ENCODE measurements at regions of chr1 and their contacts with region 1.

Region 1: DNA sequence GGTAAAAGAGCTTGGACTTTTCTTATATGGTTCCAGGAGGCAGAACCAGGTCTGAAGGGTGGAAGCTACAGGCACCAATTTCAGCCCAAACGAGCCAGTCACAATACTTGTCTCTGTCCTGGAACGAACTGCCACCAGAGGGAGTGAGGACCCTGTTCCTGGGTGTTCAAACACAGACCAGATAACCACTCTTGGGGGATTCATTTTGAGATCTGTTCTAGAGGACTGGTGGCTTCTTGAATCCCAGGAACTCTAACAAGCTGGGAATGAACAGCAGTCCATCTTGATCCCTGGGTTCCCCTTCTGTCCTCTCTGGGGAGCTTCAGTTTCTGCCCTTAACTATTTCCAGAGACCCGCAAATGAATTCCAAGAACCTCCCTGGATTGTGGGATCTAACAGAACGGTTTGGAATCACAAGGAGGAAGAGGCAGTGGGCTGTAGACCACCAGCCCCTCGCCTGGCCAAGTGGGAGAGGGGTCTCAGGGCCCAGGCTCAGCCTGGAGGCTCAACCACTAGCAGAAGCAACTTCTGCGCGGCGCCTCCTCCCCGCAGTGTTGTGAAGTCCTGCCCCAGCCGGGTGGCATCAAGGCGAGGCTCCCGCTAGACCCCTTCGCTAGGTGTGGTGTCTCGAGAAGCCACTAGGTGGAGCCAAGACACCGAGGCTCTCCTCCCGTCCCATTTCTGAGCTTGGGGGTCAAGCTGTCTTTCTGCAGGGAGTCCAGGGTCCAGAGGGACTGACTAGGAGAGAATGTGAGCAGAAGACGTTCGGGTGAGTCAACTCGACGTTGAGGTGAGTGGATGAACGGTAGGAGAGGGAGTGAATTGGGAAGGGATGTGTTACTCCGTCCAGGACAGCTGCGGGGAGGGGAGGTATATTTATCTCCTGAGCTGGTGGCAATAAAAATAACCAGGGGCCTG is 12.1 kb upstream of the NES start:
- DNase-seq: peak; percentile 81
- ATAC-seq: peak; percentile 77
- H3K4me3 ChIP-seq: peak overlapping the region; percentile 41 to 55
- H3K27ac ChIP-seq: peak overlapping the region; percentile 49
- H3K4me1 ChIP-seq: peaks cover 70 to 90% of the 10 kb centered on the region in 2 experiments
- H3K27me3 ChIP-seq: no peaks in the 10 kb centered on the region
- CTCF ChIP-seq: peak in 2 of 3 experiments; percentile 69 to 87; a peak in 4 of 6 replicates
- POLR2A ChIP-seq: no peak
- RAD21 ChIP-seq: no peak

Region 2: DNA sequence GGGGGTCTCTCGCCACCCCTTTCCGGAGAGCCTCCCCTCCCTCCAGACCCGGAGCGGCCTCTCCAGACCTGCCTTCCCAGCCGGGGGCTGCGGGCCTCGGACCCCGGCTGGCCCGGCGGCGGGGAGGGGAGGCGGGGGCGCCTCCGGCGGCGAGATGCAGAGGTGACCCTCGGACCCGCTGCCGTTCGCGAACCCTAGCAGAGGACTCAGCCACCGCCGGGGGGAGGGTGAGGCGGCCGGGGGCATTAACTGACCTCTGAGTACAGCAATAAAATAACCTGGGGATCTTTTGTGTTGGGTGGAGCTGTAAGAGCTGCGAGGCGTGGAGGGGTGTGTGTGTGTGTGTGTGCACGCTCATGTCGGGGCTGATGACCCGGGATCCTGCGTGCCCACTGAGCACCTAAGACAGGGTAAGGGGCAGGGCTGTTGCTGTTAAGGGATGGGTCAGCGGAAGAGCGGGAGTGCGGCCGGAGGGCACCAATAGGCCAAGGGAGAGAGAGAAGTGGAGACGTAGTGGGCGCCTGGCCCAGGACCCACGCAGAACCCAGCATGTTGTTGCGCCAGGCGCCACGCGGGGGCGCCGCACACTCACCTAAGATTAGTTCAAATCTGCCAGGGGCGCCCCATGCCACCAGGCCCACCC is 63.7 kb before region 1 on chr1:
- CTCF ChIA-PET with region 1: interaction called, 12 read pairs
- POLR2A ChIA-PET with region 1: no interaction called
- RAD21 ChIA-PET with region 1: interaction called in 1 of 2 experiments, 3 read pairs
- intact Hi-C with region 1: no loop called
- DNase-seq: no peak
- ATAC-seq: peak; percentile 80
- H3K4me3 ChIP-seq: peak overlapping the region; percentile 33 to 46
- H3K27ac ChIP-seq: no peak overlapping the region
- H3K4me1 ChIP-seq: peaks cover 3 to 7% of the 10 kb centered on the region in 2 experiments; a peak in 2 of 4 replicates
- H3K27me3 ChIP-seq: no peaks in the 10 kb centered on the region
- CTCF ChIP-seq: peak; percentile 68 to 91 (median 84); a peak in 5 of 6 replicates
- POLR2A ChIP-seq: no peak
- RAD21 ChIP-seq: peak; percentile 73

Region 3: GRCh38 chr1:156652131-156652991 is 36.9 kb before region 1 on chr1:
- CTCF ChIA-PET with region 1: no interaction called
- POLR2A ChIA-PET with region 1: no interaction called
- RAD21 ChIA-PET with region 1: no interaction called
- intact Hi-C with region 1: no loop called
- DNase-seq: no peak
- ATAC-seq: no peak
- H3K4me3 ChIP-seq: no peak overlapping the region
- H3K27ac ChIP-seq: no peak overlapping the region
- H3K4me1 ChIP-seq: peaks cover 0 to 9% of the 10 kb centered on the region in 2 experiments; a peak in 1 of 4 replicates
- H3K27me3 ChIP-seq: no peaks in the 10 kb centered on the region
- CTCF ChIP-seq: no peak
- POLR2A ChIP-seq: no peak
- RAD21 ChIP-seq: no peak

Region 4: GRCh38 chr1:156677616-156678596 is 11.4 kb before region 1 on chr1:
- CTCF ChIA-PET with region 1: interaction called, 16 read pairs
- POLR2A ChIA-PET with region 1: interaction called, 5 read pairs
- RAD21 ChIA-PET with region 1: no interaction called
- intact Hi-C with region 1: no loop called
- DNase-seq: no peak
- ATAC-seq: peak; percentile 71
- H3K4me3 ChIP-seq: peak overlapping the region; percentile 39 to 53
- H3K27ac ChIP-seq: peak overlapping the region; percentile 36; the same call in 1 of the 2 replicates
- H3K4me1 ChIP-seq: peaks cover 14 to 32% of the 10 kb centered on the region in 2 experiments
- H3K27me3 ChIP-seq: no peaks in the 10 kb centered on the region
- CTCF ChIP-seq: peak; percentile 88 to 98 (median 95)
- POLR2A ChIP-seq: no peak
- RAD21 ChIP-seq: peak; percentile 99

Region 5: GRCh38 chr1:156711011-156711817 is 21.9 kb after region 1 on chr1:
- CTCF ChIA-PET with region 1: interaction called, 310 read pairs
- POLR2A ChIA-PET with region 1: interaction called, 87 read pairs
- RAD21 ChIA-PET with region 1: interaction called, 24 to 45 read pairs
- intact Hi-C with region 1: loop called (anchors 1 kb)
- DNase-seq: no peak
- ATAC-seq: no peak
- H3K4me3 ChIP-seq: no peak overlapping the region
- H3K27ac ChIP-seq: 0 out of 2 replicates have a peak overlapping the region, but pooled peaks have one; percentile 66
- H3K4me1 ChIP-seq: peaks cover 88 to 90% of the 10 kb centered on the region in 2 experiments
- H3K27me3 ChIP-seq: no peaks in the 10 kb centered on the region
- CTCF ChIP-seq: no peak
- POLR2A ChIP-seq: no peak
- RAD21 ChIP-seq: no peak

Region 6: DNA sequence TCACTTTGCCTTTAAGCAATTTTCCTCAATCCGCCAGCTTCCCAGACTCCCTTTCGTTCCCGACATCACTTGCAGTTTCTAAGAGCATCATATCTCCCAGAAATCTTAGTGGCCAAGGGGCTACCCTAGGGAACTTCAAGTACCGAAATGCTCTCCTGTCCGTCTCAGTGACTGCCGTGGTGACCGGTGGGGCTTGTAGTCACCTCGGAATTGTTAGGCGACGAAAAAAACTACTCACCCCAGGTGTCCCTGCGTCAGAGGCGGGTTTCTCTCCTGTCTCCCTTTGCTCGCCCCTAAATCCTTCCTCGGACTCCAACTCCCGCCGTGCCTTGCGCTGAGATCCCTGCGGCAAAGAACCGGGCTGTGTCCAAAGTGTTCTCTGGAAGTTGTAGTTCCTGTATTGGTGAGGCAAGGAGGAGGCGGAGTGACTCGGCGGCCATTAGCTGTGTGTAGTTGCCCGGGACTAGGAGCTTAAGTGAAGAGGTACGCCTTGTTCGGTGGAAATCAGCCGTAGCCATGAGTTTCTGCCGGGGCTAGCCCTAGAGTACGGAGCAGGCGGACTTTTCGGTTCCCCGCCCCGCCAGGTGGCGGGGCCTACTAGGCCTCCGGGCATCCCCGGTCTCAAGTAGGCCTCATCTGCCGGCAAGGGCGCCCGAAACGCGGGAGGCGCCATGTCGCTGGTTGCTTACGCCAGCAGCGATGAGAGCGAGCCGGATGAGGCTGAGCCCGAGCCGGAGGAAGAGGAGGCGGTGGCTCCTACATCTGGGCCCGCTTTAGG is 78.0 kb after region 1 on chr1 and contains the start of gene PRCC:
- CTCF ChIA-PET with region 1: interaction called, 16 read pairs
- POLR2A ChIA-PET with region 1: interaction called, 4 read pairs
- RAD21 ChIA-PET with region 1: no interaction called
- intact Hi-C with region 1: loop called (anchors 5 kb)
- DNase-seq: peak; percentile 99
- ATAC-seq: peak; percentile 92
- H3K4me3 ChIP-seq: peak within 1 kb of the TSS; percentile 74 to 95
- H3K27ac ChIP-seq: peak within 1 kb of the TSS; percentile 85
- H3K4me1 ChIP-seq: peaks cover 13 to 19% of the 10 kb centered on the region in 2 experiments
- H3K27me3 ChIP-seq: no peaks in the 10 kb centered on the region
- CTCF ChIP-seq: no peak
- POLR2A ChIP-seq: peak; percentile 47
- RAD21 ChIP-seq: peak; percentile 34; the same call in 1 of the 2 replicates
- total RNA-seq, gene PRCC: 78.1 TPM

Region 7: GRCh38 chr1:156892190-156893047 is 203.1 kb after region 1 on chr1:
- CTCF ChIA-PET with region 1: interaction called, 47 read pairs
- POLR2A ChIA-PET with region 1: interaction called, 4 read pairs
- RAD21 ChIA-PET with region 1: interaction called, 5 read pairs
- intact Hi-C with region 1: loop called (anchors 1 kb)
- DNase-seq: peak; percentile 75
- ATAC-seq: peak; percentile 77
- H3K4me3 ChIP-seq: peak overlapping the region in 1 of 2 experiments; percentile 18; a peak in 1 of 4 replicates
- H3K27ac ChIP-seq: no peak overlapping the region
- H3K4me1 ChIP-seq: peaks cover 24 to 60% of the 10 kb centered on the region in 2 experiments
- H3K27me3 ChIP-seq: no peaks in the 10 kb centered on the region
- CTCF ChIP-seq: peak in 2 of 3 experiments; percentile 86 to 89; a peak in 4 of 6 replicates
- POLR2A ChIP-seq: no peak
- RAD21 ChIP-seq: no peak